A673 (cell line): ENCODE measurements at regions of chrX and their contacts with region 1.

Region 1: DNA sequence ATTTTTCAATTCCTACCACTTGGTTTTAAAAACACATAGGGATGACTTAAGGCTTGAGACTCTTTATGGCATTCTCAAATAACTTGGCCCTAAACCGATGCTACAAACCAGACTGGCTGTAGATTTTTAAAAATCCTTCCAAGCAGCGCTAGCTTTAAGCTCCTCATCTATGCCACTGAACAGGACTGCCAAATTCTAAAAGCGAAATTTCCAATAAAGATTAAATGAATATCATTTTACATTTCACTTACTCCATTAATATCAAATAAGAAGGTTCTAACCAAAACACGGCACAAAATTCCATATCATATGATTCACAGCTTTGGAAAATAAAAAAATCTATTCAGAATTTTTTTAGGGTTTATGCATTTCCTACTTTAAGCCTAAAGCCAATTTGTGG is 134.2 kb downstream of the FANCB start:
- DNase-seq: no peak
- H3K4me3 ChIP-seq: no peak overlapping the region
- H3K27ac ChIP-seq: no peak overlapping the region
- H3K4me1 ChIP-seq: no peaks in the 10 kb centered on the region
- H3K27me3 ChIP-seq: no peaks in the 10 kb centered on the region
- CTCF ChIP-seq: no peak

Region 2: GRCh38 chrX:16517039-16517605 is 1778.5 kb after region 1 on chrX:
- CTCF ChIA-PET with region 1: interaction called, 13 read pairs
- POLR2A ChIA-PET with region 1: no interaction called
- intact Hi-C with region 1: no loop called
- DNase-seq: no peak
- H3K4me3 ChIP-seq: no peak overlapping the region
- H3K27ac ChIP-seq: no peak overlapping the region
- H3K4me1 ChIP-seq: no peaks in the 10 kb centered on the region
- H3K27me3 ChIP-seq: no peaks in the 10 kb centered on the region
- CTCF ChIP-seq: no peak